HepG2 (cell line): ENCODE measurements at regions of chr3 and their contacts with region 1.

Region 1: GRCh38 chr3:177491296-177492032 is 294.2 kb upstream of the TBL1XR1 start:
- DNase-seq: no peak
- ATAC-seq: no peak
- H3K4me3 ChIP-seq: no peak overlapping the region
- H3K27ac ChIP-seq: no peak overlapping the region
- H3K4me1 ChIP-seq: peaks cover 14% of the 10 kb centered on the region
- H3K27me3 ChIP-seq: no peaks in the 10 kb centered on the region
- CTCF ChIP-seq: no peak
- EP300 ChIP-seq: no peak
- POLR2A ChIP-seq: no peak
- RAD21 ChIP-seq: no peak

Region 2: GRCh38 chr3:177208781-177209180 is 282.7 kb before region 1 on chr3:
- CTCF ChIA-PET with region 1: no interaction called
- POLR2A ChIA-PET with region 1: no interaction called
- in situ Hi-C with region 1: no loop called
- intact Hi-C with region 1: no loop called
- DNase-seq: peak; percentile 24
- ATAC-seq: 0 out of 3 replicates have a peak, but pooled peaks have one; percentile 8
- H3K4me3 ChIP-seq: peak overlapping the region in 2 of 3 experiments; percentile 6 to 48; a peak in 2 of 6 replicates
- H3K27ac ChIP-seq: no peak overlapping the region
- H3K4me1 ChIP-seq: peaks cover 54% of the 10 kb centered on the region
- H3K27me3 ChIP-seq: no peaks in the 10 kb centered on the region
- CTCF ChIP-seq: no peak
- EP300 ChIP-seq: no peak
- POLR2A ChIP-seq: no peak
- RAD21 ChIP-seq: no peak

Region 3: GRCh38 chr3:177345049-177345972 is 146.2 kb before region 1 on chr3:
- CTCF ChIA-PET with region 1: no interaction called
- POLR2A ChIA-PET with region 1: no interaction called
- in situ Hi-C with region 1: no loop called
- intact Hi-C with region 1: no loop called
- DNase-seq: peak; percentile 91
- ATAC-seq: peak; percentile 97
- H3K4me3 ChIP-seq: no peak overlapping the region
- H3K27ac ChIP-seq: peak overlapping the region; percentile 41
- H3K4me1 ChIP-seq: peaks cover 45% of the 10 kb centered on the region
- H3K27me3 ChIP-seq: no peaks in the 10 kb centered on the region
- CTCF ChIP-seq: no peak
- EP300 ChIP-seq: peak; percentile 56 to 68; a peak in 3 of 4 replicates
- POLR2A ChIP-seq: 0 out of 4 replicates have a peak, but pooled peaks of 1 of the 2 experiments have one; percentile 31
- RAD21 ChIP-seq: no peak

Region 4: GRCh38 chr3:177615015-177615414 is 123.6 kb after region 1 on chr3:
- CTCF ChIA-PET with region 1: no interaction called
- POLR2A ChIA-PET with region 1: no interaction called
- in situ Hi-C with region 1: no loop called
- intact Hi-C with region 1: loop called (anchors 10 kb)
- DNase-seq: peak; percentile 82
- ATAC-seq: peak; percentile 90
- H3K4me3 ChIP-seq: no peak overlapping the region
- H3K27ac ChIP-seq: no peak overlapping the region
- H3K4me1 ChIP-seq: peaks cover 67% of the 10 kb centered on the region
- H3K27me3 ChIP-seq: no peaks in the 10 kb centered on the region
- CTCF ChIP-seq: no peak
- EP300 ChIP-seq: peak in 1 of 2 experiments; percentile 65; a peak in 2 of 4 replicates
- POLR2A ChIP-seq: no peak
- RAD21 ChIP-seq: no peak